PC-9 (cell line): ENCODE measurements at regions of chr3 and their contacts with region 1.

Region 1: DNA sequence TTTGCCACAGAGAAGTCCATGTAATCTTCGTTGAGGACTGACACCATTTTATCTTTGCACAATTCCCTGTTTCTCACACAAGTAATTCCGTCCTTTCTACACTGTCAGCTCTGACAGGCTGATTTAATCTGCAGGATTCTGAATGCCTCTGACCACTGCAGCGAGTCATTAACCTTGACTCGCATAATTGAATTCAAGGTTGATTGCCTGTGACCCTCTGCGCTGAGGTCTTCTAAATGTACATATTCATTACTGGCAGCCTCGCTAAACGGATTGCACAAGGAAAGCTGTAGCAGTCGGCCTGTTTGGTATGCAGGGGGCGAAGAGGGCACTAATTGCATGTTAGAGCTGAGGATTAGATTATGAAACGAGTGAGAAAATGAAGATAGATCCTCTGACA is 147.8 kb downstream of the SHOX2 start:
- DNase-seq: no peak
- H3K4me3 ChIP-seq: no peak overlapping the region
- H3K27ac ChIP-seq: no peak overlapping the region
- H3K4me1 ChIP-seq: no peaks in the 10 kb centered on the region
- H3K27me3 ChIP-seq: no peaks in the 10 kb centered on the region
- CTCF ChIP-seq: no peak

Region 2: DNA sequence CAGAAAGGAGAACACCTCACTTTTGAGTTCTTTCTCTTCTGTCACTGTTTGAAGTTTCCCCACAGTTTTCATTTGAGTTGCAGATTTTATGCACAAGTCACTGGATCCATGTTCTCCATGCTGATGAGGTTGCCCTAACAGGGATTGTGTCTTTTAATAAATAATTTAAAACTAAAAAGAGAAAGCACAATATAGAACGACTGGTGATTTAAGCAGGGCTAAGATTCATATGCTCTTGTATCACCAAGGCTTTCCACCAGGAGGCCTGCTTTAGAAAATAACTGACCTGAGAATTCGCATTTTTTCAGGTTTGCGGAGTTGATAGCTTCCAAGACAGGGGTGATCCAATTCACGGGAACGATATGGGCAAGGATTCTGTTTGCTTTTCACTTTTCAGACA is 203.2 kb before region 1 on chr3:
- CTCF ChIA-PET with region 1: no interaction called
- POLR2A ChIA-PET with region 1: no interaction called
- intact Hi-C with region 1: loop called (anchors 10 kb)
- DNase-seq: no peak
- H3K4me3 ChIP-seq: no peak overlapping the region
- H3K27ac ChIP-seq: no peak overlapping the region
- H3K4me1 ChIP-seq: no peaks in the 10 kb centered on the region
- H3K27me3 ChIP-seq: no peaks in the 10 kb centered on the region
- CTCF ChIP-seq: peak; percentile 44; the same call in 1 of the 2 replicates